IMR-90 (cell line): ENCODE measurements at regions of chr11 and their contacts with region 1.

Region 1: DNA sequence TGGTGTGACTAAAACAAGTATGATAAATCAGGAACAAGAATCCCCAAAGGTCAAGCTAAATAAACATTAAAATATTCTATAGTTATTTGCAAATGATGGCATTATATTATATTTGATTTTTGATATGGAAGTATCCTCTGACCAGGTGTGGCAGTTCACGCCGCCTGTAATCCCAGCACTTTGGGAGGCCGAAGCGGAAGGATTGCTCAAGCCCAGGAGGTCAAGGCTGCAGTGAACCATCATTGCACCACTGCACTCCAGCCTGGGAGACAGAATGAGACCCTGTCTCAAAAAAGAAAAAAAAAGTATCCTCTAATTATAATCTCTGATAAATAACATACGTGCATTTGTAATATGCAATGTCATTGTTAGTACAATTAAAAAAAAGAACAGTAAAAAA is 6.6 kb upstream of the POU2AF3 start:
- DNase-seq: no peak
- ATAC-seq: no peak
- H3K4me3 ChIP-seq: no peak overlapping the region
- H3K27ac ChIP-seq: no peak overlapping the region
- H3K4me1 ChIP-seq: no peaks in the 10 kb centered on the region
- H3K27me3 ChIP-seq: peaks cover 15% of the 10 kb centered on the region
- CTCF ChIP-seq: no peak
- POLR2A ChIP-seq: no peak
- RAD21 ChIP-seq: no peak

Region 2: DNA sequence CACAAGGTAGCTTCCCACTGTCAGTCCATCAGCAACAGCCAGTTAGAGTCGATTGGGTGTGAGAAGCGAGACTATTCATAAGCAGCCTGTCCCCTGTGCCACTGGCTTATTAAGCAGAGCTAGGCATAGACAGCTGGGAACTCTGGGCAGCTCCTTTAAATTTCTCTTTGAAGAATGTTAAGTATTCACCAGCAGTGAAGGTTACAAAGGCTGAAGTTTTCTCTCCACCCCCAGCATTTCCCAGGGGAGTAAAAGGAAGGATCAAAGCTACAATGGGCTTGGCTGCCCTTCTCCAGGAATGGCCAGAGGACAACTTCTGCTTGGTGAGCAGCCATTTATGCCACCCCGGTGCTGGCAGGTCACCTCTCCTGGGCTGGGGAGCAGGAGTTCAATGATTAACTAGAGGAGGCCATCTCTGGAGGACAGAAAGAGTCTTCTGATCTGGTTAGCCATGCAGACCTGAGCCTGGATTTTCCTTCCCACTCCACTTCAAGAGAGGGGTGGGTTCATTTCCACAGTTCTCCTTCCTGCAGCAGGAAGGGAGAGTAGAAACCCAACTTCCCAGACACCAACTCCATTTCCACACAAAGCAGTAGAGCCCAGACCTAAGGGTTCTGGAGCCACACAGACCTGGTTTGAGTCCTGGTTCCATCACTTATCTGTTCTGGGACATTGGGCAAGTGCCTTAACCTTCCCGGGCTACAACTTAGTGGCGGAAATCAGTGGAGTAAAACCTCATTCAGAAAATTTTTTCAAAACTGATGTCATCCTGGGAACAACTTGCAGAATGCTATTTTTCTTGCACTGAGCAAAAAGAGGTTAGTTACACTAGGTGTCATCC is 29.2 kb after region 1 on chr11:
- CTCF ChIA-PET with region 1: no interaction called
- POLR2A ChIA-PET with region 1: no interaction called
- dilution Hi-C with region 1: no loop called
- in situ Hi-C with region 1: no loop called
- intact Hi-C with region 1: loop called (anchors 2 kb)
- DNase-seq: no peak
- ATAC-seq: 0 out of 2 replicates have a peak, but pooled peaks have one; percentile 47
- H3K4me3 ChIP-seq: no peak overlapping the region
- H3K27ac ChIP-seq: no peak overlapping the region
- H3K4me1 ChIP-seq: peaks cover 6% of the 10 kb centered on the region
- H3K27me3 ChIP-seq: peaks cover 8% of the 10 kb centered on the region
- CTCF ChIP-seq: no peak
- POLR2A ChIP-seq: no peak
- RAD21 ChIP-seq: no peak